ENCODE measurements at regions of chr10 and their contacts with region 1.

Region 1: DNA sequence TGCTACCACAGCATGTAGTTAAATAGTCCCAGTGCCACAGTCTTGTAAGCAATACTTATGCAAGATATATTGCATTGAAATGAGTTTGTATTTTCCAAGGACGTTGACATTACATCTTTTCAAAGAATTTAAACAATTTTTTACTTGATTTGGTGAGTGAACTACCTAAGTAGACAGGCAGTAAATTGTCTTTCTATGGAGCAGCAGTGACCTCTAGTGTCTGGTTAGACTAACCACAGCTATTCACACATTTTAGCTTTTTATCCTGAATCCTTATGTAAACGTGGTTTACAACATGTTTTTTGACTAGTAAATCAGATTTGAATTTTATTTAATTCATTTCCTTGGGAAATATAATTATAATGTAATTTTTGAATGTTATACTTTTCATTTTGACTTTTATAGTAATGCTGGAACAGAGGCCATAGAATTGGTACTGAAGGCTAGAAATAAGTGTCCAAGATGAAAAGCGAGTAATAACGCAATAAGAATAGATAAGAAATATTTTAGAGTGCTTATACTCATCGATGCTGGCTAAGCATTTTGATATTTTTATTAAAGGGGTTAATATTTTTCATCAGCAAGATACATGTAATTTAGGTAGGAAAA is 5.6 kb downstream of the LRRTM3 start:
- DNase-seq: peak; percentile 43
- ATAC-seq: peak; percentile 67
- H3K4me3 ChIP-seq: no peak overlapping the region
- H3K27ac ChIP-seq: no peak overlapping the region
- H3K4me1 ChIP-seq: no peaks in the 10 kb centered on the region
- H3K27me3 ChIP-seq: peaks cover 2 to 10% of the 10 kb centered on the region in 2 experiments; a peak in 2 of 5 replicates
- CTCF ChIP-seq: peak; percentile 74
- EP300 ChIP-seq: no peak
- POLR2A ChIP-seq: no peak
- RAD21 ChIP-seq: peak; percentile 57

Region 2: DNA sequence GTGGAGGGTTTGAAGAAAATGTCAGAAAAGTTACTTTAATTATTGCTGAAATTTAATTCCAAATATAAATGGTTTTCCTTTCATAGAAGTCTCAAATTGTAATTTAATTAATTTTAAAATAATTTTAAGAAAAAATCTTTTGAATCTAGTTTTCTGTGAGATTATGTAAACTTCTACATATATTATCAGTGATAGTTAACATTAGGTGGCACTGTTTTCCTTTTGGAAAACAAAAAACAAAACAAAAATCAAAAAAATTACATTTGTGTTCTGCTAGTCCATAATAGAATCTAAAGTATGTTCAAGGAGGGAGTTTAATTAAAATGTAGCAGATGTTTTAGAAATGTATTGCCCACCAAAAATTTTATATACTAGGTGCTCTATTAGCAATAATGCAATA is 1953.5 kb before region 1 on chr10:
- CTCF ChIA-PET with region 1: no interaction called
- POLR2A ChIA-PET with region 1: no interaction called
- in situ Hi-C with region 1: no loop called
- intact Hi-C with region 1: loop called (anchors 5 kb)
- DNase-seq: no peak
- ATAC-seq: no peak
- H3K4me3 ChIP-seq: no peak overlapping the region
- H3K27ac ChIP-seq: no peak overlapping the region
- H3K4me1 ChIP-seq: no peaks in the 10 kb centered on the region
- H3K27me3 ChIP-seq: no peaks in the 10 kb centered on the region; a peak in 1 of 5 replicates
- CTCF ChIP-seq: no peak
- EP300 ChIP-seq: no peak
- POLR2A ChIP-seq: no peak
- RAD21 ChIP-seq: no peak

Region 3: DNA sequence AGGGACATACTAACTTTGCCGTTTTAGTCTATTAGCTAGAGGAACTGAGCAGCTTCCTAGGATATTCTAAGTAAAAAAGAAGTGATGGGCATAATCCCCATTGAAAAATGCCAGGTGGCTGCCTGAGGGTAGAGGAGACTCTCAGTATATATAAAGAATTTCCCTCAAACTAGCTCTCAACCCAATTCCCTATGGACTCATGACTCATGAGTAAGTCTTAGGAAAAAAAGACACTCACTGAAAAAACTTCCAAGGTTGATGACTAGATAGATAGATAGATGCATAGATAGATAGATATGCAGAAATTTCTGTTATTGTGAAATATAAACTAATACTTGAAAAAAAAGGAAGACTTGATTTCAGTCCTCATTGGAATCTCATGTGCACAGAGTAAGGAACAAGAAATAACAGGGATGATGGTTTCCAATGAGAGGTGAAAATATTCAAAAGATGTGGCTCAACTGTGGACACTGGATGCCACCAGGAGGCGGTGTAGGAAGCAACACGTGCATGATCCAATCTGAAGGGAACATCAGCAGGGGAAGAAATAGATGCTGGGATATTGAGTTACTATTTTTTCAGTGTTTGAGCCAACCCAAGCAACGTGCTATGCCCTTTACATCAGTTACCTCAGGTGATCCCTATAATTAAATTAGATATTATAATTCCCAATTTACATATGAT is 716.6 kb before region 1 on chr10:
- CTCF ChIA-PET with region 1: no interaction called
- POLR2A ChIA-PET with region 1: no interaction called
- in situ Hi-C with region 1: no loop called
- intact Hi-C with region 1: loop called (anchors 2 kb)
- DNase-seq: peak; percentile 4
- ATAC-seq: no peak
- H3K4me3 ChIP-seq: no peak overlapping the region
- H3K27ac ChIP-seq: no peak overlapping the region
- H3K4me1 ChIP-seq: no peaks in the 10 kb centered on the region
- H3K27me3 ChIP-seq: no peaks in the 10 kb centered on the region
- CTCF ChIP-seq: peak; percentile 53
- EP300 ChIP-seq: no peak
- POLR2A ChIP-seq: no peak
- RAD21 ChIP-seq: no peak

Region 4: DNA sequence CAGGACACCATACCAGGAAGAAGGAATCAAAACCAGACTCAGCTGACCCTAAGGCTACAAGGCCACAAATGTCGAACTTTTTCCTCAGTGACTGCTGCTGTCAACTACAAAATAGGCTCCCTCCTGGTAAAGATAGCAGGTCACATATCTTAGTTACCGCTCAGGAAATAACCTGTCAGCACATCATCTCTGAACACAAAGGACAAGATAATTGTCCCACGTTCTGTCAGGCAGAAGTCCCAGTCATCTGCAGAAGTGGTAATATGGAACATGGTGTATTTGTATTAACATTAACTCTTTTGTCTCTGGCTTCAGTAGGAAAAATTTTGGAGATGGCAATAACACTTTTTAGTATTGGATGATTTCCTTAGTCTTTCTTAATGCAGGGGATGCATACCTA is 635.8 kb before region 1 on chr10:
- CTCF ChIA-PET with region 1: no interaction called
- POLR2A ChIA-PET with region 1: no interaction called
- in situ Hi-C with region 1: no loop called
- intact Hi-C with region 1: no loop called
- DNase-seq: no peak
- ATAC-seq: no peak
- H3K4me3 ChIP-seq: no peak overlapping the region
- H3K27ac ChIP-seq: no peak overlapping the region
- H3K4me1 ChIP-seq: no peaks in the 10 kb centered on the region
- H3K27me3 ChIP-seq: no peaks in the 10 kb centered on the region
- CTCF ChIP-seq: no peak
- EP300 ChIP-seq: no peak
- POLR2A ChIP-seq: no peak
- RAD21 ChIP-seq: no peak

Region 5: GRCh38 chr10:66627156-66627555 is 304.3 kb before region 1 on chr10:
- CTCF ChIA-PET with region 1: no interaction called
- POLR2A ChIA-PET with region 1: no interaction called
- in situ Hi-C with region 1: no loop called
- intact Hi-C with region 1: loop called (anchors 5 kb)
- DNase-seq: peak; percentile 34
- ATAC-seq: peak; percentile 92
- H3K4me3 ChIP-seq: no peak overlapping the region
- H3K27ac ChIP-seq: no peak overlapping the region
- H3K4me1 ChIP-seq: no peaks in the 10 kb centered on the region
- H3K27me3 ChIP-seq: no peaks in the 10 kb centered on the region
- CTCF ChIP-seq: peak; percentile 58
- EP300 ChIP-seq: no peak
- POLR2A ChIP-seq: no peak
- RAD21 ChIP-seq: no peak

Region 6: DNA sequence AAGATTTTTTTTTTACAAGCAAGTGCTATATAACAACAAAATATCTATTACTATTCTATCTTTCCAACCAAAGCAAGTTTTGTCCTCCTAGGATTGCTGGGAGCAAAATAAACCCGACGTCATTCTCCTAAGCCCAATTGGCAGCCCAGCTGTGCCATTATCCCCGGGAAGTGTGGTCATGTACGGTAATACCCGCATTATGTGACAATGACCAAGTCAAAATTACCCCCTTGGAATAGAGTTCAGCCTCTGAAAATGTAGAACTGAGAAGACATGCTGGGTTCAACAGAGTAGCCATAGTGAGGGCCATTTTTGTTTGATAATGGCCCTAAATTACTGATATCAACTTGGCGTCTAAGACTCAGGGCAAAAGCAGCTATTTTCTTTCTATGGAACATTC is 209.9 kb after region 1 on chr10:
- CTCF ChIA-PET with region 1: no interaction called
- POLR2A ChIA-PET with region 1: no interaction called
- in situ Hi-C with region 1: no loop called
- intact Hi-C with region 1: no loop called
- DNase-seq: no peak
- ATAC-seq: no peak
- H3K4me3 ChIP-seq: no peak overlapping the region
- H3K27ac ChIP-seq: no peak overlapping the region
- H3K4me1 ChIP-seq: no peaks in the 10 kb centered on the region
- H3K27me3 ChIP-seq: no peaks in the 10 kb centered on the region
- CTCF ChIP-seq: no peak
- EP300 ChIP-seq: no peak
- POLR2A ChIP-seq: no peak
- RAD21 ChIP-seq: no peak

Region 7: DNA sequence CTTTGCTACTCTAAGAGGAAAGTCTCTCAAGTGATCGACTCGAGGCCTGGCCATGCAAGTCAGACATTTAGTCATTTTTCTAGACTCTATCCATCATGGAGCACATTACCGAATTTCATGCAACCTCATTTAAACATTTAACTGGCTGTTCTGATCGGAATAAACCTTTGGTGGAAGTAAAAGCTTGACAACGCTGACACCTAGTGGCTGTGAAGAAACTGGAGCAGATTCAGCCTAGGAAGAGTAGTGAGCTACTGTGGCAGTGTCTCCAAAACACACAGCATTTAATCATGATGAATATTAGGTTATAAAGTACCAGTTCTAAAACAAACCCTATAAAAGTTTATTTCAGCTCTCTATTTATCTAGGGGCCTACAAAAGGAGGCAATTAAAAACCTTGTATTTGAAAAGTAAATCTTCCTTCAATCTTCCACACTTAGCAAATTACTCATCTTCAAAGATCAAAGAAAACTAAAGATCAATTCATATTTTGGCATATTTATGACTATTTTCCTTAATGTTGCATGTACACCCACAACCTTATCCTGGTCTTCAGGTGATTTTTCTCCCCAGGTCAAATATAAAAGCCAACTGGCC is 589.6 kb after region 1 on chr10:
- CTCF ChIA-PET with region 1: no interaction called
- POLR2A ChIA-PET with region 1: no interaction called
- in situ Hi-C with region 1: no loop called
- intact Hi-C with region 1: loop called (anchors 5 kb)
- DNase-seq: peak; percentile 38
- ATAC-seq: peak; percentile 92
- H3K4me3 ChIP-seq: no peak overlapping the region
- H3K27ac ChIP-seq: no peak overlapping the region
- H3K4me1 ChIP-seq: no peaks in the 10 kb centered on the region
- H3K27me3 ChIP-seq: no peaks in the 10 kb centered on the region
- CTCF ChIP-seq: peak; percentile 83
- EP300 ChIP-seq: no peak
- POLR2A ChIP-seq: no peak
- RAD21 ChIP-seq: peak; percentile 55; the same call in 1 of the 2 replicates

Measured in HepG2 (cell line).